ENCODE measurements at regions of chr2 and their contacts with region 1.

Region 1: DNA sequence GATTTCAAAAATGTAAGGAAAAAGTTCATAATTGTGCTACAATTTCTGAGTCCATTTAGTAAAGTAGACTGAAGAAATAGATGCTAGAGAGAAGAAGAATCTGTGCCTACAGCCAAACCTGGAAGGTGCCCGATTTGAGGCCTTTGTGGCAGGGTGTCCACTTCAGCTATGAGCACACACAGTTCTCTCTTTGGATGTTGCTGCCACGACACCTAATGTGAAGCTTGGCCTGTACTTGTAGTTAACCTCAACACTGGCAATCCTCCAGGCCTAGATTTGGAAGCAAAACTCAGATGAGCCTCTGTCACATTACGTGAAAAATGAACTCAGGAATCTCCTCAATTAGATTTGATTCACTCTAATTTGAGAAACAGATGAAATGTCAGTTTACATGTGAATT is 90.1 kb upstream of the LRP1B start:
- DNase-seq: peak; percentile 31 to 67 (median 50)
- ATAC-seq: peak; percentile 92 to 96
- H3K4me3 ChIP-seq: no peak overlapping the region
- H3K27ac ChIP-seq: no peak overlapping the region
- H3K4me1 ChIP-seq: no peaks in the 10 kb centered on the region
- H3K27me3 ChIP-seq: no peaks in the 10 kb centered on the region

Region 2: DNA sequence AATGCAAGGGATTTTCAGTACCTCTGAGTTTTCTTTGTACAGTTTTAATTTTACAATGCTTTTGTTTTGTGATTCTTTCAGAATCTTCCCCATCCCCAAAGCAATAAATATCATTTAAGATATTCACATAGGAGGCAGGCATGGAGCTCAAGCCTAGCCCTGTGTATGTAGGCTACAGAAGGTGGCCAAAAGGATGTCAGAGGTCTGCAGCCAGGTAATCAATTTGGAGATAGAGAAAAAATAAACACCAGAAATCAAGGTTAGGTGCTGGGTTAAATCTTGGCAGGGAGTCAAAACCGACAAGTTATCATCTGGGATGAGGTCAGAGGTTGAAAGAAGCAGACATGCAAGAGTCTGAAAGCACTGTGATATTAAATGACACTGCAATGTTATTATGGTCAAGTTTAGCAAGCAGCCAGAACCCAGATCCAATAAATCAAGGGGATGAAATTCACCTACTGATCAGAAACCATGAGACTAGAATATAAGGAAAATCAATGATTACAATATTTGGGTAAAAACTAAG is 45.0 kb before region 1 on chr2:
- intact Hi-C with region 1: loop called in 1 of 4 experiments (anchors 10 kb)
- DNase-seq: no peak
- ATAC-seq: no peak
- H3K4me3 ChIP-seq: no peak overlapping the region
- H3K27ac ChIP-seq: no peak overlapping the region
- H3K4me1 ChIP-seq: no peaks in the 10 kb centered on the region
- H3K27me3 ChIP-seq: no peaks in the 10 kb centered on the region